ENCODE measurements at regions of chr7 and their contacts with region 1.

Region 1: DNA sequence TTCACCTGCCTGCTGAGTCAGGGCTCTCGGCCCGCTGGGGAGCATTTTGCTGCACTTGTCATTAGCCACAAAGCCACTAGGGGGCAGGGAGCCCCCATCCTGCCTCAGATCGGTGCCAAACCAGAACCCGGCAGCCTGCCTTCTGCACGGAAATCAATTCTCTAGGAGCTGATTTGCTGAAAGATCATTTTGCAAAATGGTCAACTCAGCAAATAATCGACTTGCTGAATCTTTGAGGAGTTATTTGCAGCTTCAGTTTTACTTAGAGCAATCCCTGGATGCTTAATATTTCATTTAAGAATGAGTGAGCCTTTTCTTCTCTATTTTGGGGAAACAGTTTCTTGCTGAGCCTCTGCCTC is 1.7 kb upstream of the GIMAP8 start:
- DNase-seq: peak; percentile 94
- ATAC-seq: peak; percentile 65
- H3K4me3 Mint-ChIP-seq: peak overlapping the region; percentile 97
- H3K27ac Mint-ChIP-seq: peak overlapping the region; percentile 100
- H3K4me1 Mint-ChIP-seq: peaks cover 46% of the 10 kb centered on the region
- H3K27me3 Mint-ChIP-seq: no peaks in the 10 kb centered on the region
- CTCF ChIP-seq: peak; percentile 95

Region 2: GRCh38 chr7:149714050-149714909 is 734.5 kb before region 1 on chr7:
- CTCF ChIA-PET with region 1: no interaction called
- POLR2A ChIA-PET with region 1: no interaction called
- intact Hi-C with region 1: no loop called
- DNase-seq: peak; percentile 95
- ATAC-seq: peak; percentile 94
- H3K4me3 Mint-ChIP-seq: peak overlapping the region; percentile 94
- H3K27ac Mint-ChIP-seq: peak overlapping the region; percentile 86
- H3K4me1 Mint-ChIP-seq: peaks cover 28% of the 10 kb centered on the region
- H3K27me3 Mint-ChIP-seq: no peaks in the 10 kb centered on the region
- CTCF ChIP-seq: no peak

Region 3: GRCh38 chr7:150378853-150379440 is 69.8 kb before region 1 on chr7 and contains the start of gene ZNF775:
- CTCF ChIA-PET with region 1: no interaction called
- POLR2A ChIA-PET with region 1: no interaction called
- intact Hi-C with region 1: no loop called
- DNase-seq: peak; percentile 94
- ATAC-seq: peak; percentile 97
- H3K4me3 Mint-ChIP-seq: peak within 1 kb of the TSS; percentile 88
- H3K27ac Mint-ChIP-seq: peak within 1 kb of the TSS; percentile 70
- H3K4me1 Mint-ChIP-seq: peaks cover 47% of the 10 kb centered on the region
- H3K27me3 Mint-ChIP-seq: no peaks in the 10 kb centered on the region
- CTCF ChIP-seq: no peak
- total RNA-seq, gene ZNF775: 4.7 to 4.9 TPM

Region 4: GRCh38 chr7:150489782-150490181 is 41.0 kb after region 1 on chr7:
- CTCF ChIA-PET with region 1: interaction called, 10 read pairs
- POLR2A ChIA-PET with region 1: no interaction called
- intact Hi-C with region 1: loop called (anchors 5 kb)
- DNase-seq: no peak
- ATAC-seq: no peak
- H3K4me3 Mint-ChIP-seq: no peak overlapping the region
- H3K27ac Mint-ChIP-seq: no peak overlapping the region
- H3K4me1 Mint-ChIP-seq: peaks cover 32% of the 10 kb centered on the region
- H3K27me3 Mint-ChIP-seq: no peaks in the 10 kb centered on the region
- CTCF ChIP-seq: no peak

Region 5: GRCh38 chr7:150514748-150515222 is 66.0 kb after region 1 on chr7 and contains the start of gene GIMAP7:
- CTCF ChIA-PET with region 1: interaction called, 39 read pairs
- POLR2A ChIA-PET with region 1: interaction called, 157 read pairs
- intact Hi-C with region 1: loop called (anchors 2 kb)
- DNase-seq: peak; percentile 72
- ATAC-seq: peak; percentile 80
- H3K4me3 Mint-ChIP-seq: peak within 1 kb of the TSS; percentile 98
- H3K27ac Mint-ChIP-seq: peak within 1 kb of the TSS; percentile 99
- H3K4me1 Mint-ChIP-seq: peaks cover 46% of the 10 kb centered on the region
- H3K27me3 Mint-ChIP-seq: no peaks in the 10 kb centered on the region
- CTCF ChIP-seq: no peak
- total RNA-seq, gene GIMAP7: 29.0 to 29.5 TPM

Region 6: DNA sequence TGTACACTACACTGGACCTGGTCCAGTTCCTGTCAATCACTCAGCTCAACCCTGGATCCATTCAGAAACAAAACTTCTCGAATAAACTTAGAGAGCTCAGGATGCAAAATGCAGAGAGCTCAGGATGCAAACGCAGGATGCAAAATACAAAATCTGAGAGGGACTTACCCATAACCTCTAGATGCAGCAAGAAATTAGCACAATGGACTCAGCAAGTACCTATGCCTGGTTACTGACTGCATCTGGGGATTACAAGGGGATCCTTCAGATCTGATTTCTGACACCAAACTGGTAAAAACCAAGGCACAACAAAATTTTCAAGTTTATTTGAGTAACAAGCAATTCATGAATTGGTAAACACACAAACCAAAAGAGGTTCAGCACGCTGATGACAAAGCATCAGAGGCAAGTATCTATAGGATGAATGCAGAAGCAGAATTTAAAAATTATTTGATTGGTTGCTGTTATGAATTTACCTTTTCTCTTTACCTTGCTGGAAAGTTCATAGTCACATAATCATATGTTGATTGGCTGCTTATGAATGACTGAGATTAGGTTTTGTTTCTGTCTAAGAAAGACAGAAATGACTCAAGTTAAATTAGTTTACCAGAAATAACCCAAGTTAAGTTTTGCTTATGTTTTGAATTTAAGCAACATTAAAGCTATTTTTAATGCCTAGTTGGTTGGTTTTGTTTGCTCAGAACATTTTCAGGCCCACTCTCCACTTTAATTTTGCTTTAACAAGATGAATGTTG is 172.0 kb after region 1 on chr7:
- CTCF ChIA-PET with region 1: interaction called, 10 read pairs
- POLR2A ChIA-PET with region 1: interaction called, 3 read pairs
- intact Hi-C with region 1: no loop called
- DNase-seq: no peak
- ATAC-seq: peak; percentile 46
- H3K4me3 Mint-ChIP-seq: no peak overlapping the region
- H3K27ac Mint-ChIP-seq: peak overlapping the region; percentile 80
- H3K4me1 Mint-ChIP-seq: peaks cover 54% of the 10 kb centered on the region
- H3K27me3 Mint-ChIP-seq: no peaks in the 10 kb centered on the region
- CTCF ChIP-seq: no peak

Region 7: DNA sequence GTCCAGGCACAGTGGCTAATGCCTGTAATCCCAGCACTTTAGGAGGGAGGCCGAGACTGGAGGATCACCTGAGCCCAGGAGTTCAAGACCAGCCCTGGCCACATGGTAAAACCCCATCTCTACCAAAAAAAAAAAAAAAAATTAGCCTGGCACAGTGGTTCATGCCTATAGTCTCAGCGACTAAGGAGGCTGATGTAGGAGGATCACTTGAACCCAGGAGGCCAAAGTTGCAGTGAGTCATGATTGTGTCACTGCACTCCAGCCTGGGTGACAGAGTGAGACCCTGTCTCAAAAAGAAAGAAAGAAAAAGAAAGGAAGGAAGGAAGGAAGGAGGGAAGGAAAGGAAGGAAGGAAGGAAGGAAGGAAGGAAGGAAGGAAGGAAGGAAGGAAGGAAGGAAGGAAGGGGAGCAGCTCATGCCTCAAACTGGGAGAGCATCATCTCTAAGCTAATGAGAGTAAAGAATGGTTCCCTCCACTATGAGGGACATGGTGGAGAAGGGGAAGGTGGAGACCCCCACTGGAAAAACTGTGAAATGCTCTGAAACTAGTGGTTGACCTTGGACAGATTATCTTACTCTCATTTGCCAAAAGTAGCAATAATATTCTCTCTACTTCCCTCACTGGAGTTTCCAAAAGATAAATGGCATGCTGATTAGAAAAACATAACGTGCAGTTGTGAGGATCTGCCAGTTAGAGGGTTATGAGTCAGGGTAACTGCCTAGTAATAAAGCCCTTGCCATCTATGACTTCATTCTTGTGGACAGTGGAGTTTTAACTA is 305.2 kb after region 1 on chr7:
- CTCF ChIA-PET with region 1: interaction called, 93 read pairs
- POLR2A ChIA-PET with region 1: interaction called, 9 read pairs
- intact Hi-C with region 1: loop called (anchors 1 kb)
- DNase-seq: peak; percentile 60
- ATAC-seq: peak; percentile 60
- H3K4me3 Mint-ChIP-seq: no peak overlapping the region
- H3K27ac Mint-ChIP-seq: peak overlapping the region; percentile 95
- H3K4me1 Mint-ChIP-seq: peaks cover 77% of the 10 kb centered on the region
- H3K27me3 Mint-ChIP-seq: no peaks in the 10 kb centered on the region
- CTCF ChIP-seq: no peak